SK-MEL-5 (cell line): ENCODE measurements at regions of chr21 and their contacts with region 1.

Region 1: GRCh38 chr21:25717491-25718147 is 17.1 kb downstream of the ATP5PF start:
- DNase-seq: no peak

Region 2: GRCh38 chr21:25626757-25627156 is 90.9 kb before region 1 on chr21:
- in situ Hi-C with region 1: loop called (anchors 10 kb)
- DNase-seq: no peak

Region 3: DNA sequence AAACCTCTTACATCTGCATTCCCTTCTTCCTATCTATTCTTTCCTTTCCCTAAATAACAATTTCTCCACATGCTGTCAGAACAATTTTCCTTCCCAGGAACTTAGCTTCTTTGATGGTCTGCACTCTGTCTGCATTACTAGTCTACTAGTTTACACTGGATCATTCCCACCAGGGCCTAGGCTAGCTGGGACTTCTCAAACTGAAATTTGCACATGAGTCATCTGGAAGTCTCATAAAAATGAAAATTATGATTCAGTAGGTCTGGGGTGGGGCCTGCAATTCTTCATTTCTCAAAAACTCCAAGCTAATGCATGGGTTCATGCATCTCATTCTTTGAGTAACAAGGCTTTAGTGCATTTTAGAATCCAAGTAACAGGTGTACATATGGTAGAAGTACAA is 91.4 kb after region 1 on chr21:
- in situ Hi-C with region 1: no loop called
- DNase-seq: no peak

Region 4: DNA sequence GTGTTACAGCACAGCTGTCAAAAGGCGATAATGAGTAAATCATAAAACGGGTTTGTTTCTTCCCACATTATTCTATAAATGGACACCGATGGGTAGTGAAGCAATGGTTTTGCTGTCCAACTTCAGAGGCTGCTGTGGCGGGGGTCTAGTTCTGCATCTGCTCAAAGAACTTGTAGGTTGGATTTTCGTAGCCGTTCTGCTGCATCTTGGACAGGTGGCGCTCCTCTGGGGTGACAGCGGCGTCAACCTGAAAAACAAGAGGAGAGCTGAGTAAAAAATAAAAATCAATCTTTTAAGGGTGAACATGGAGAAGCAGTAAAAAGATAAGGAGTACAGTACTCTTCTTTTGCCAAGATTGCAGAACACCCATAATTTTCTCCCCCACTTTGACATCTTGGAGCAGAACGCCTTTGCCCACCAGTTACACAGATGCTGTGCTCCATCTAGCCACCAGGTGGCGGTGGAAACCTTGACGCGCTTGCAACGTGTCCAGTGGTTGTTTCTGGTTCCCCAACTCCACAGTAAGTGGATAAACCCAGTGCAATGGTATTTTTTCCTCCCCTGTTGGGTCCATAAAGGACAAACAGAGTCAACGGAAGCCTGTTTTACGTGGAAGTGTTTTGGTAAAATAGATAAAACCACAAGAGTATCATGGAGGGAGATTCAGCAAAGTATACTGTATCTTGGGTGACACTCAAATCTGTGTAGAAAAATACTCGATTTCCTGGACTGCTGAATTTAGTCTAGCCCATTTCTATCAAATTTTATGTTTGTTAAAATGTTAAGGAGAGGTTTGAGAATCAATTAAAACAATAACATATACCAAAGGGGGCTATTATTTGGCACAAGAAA is 164.1 kb after region 1 on chr21:
- in situ Hi-C with region 1: no loop called
- DNase-seq: peak; percentile 72